Activated B cell treated with CpG ODN at 0.5 μM for 24 hours (primary cell): ENCODE measurements at regions of chr12 and their contacts with region 1.

Region 1: GRCh38 chr12:46268590-46269558 is at the start of gene SLC38A1:
- DNase-seq: peak; percentile 77
- ATAC-seq: peak; percentile 71
- H3K4me3 Mint-ChIP-seq: no peak within 1 kb of the TSS
- H3K27ac Mint-ChIP-seq: no peak within 1 kb of the TSS
- H3K4me1 Mint-ChIP-seq: peaks cover 22% of the 10 kb centered on the region
- H3K27me3 Mint-ChIP-seq: no peaks in the 10 kb centered on the region
- CTCF ChIP-seq: no peak
- total RNA-seq, gene SLC38A1: 283 and 314 TPM in 2 replicates

Region 2: GRCh38 chr12:45728630-45729232 is 540.1 kb before region 1 on chr12:
- CTCF ChIA-PET with region 1: no interaction called
- POLR2A ChIA-PET with region 1: interaction called, 9 read pairs
- intact Hi-C with region 1: loop called (anchors 5 kb)
- DNase-seq: peak; percentile 97
- ATAC-seq: peak; percentile 68
- H3K4me3 Mint-ChIP-seq: peak overlapping the region; percentile 92
- H3K27ac Mint-ChIP-seq: peak overlapping the region; percentile 99
- H3K4me1 Mint-ChIP-seq: peaks cover 41% of the 10 kb centered on the region
- H3K27me3 Mint-ChIP-seq: no peaks in the 10 kb centered on the region
- CTCF ChIP-seq: peak; percentile 60

Region 3: GRCh38 chr12:46160101-46160980 is 108.5 kb before region 1 on chr12:
- CTCF ChIA-PET with region 1: interaction called, 3 read pairs
- POLR2A ChIA-PET with region 1: interaction called, 14 read pairs
- intact Hi-C with region 1: no loop called
- DNase-seq: no peak
- ATAC-seq: peak; percentile 50
- H3K4me3 Mint-ChIP-seq: no peak overlapping the region
- H3K27ac Mint-ChIP-seq: peak overlapping the region; percentile 5
- H3K4me1 Mint-ChIP-seq: peaks cover 27% of the 10 kb centered on the region
- H3K27me3 Mint-ChIP-seq: no peaks in the 10 kb centered on the region
- CTCF ChIP-seq: no peak

Region 4: GRCh38 chr12:46209914-46210872 is 58.7 kb before region 1 on chr12:
- CTCF ChIA-PET with region 1: interaction called, 8 read pairs
- POLR2A ChIA-PET with region 1: interaction called, 154 read pairs
- intact Hi-C with region 1: loop called (anchors 1 kb)
- DNase-seq: peak; percentile 47
- ATAC-seq: peak; percentile 70
- H3K4me3 Mint-ChIP-seq: peak overlapping the region; percentile 63
- H3K27ac Mint-ChIP-seq: peak overlapping the region; percentile 93
- H3K4me1 Mint-ChIP-seq: peaks cover 94% of the 10 kb centered on the region
- H3K27me3 Mint-ChIP-seq: no peaks in the 10 kb centered on the region
- CTCF ChIP-seq: no peak

Region 5: GRCh38 chr12:46303039-46303666 is 34.3 kb after region 1 on chr12:
- CTCF ChIA-PET with region 1: interaction called, 10 read pairs
- POLR2A ChIA-PET with region 1: interaction called, 22 read pairs
- intact Hi-C with region 1: loop called (anchors 1 kb)
- DNase-seq: no peak
- ATAC-seq: peak; percentile 74
- H3K4me3 Mint-ChIP-seq: no peak overlapping the region
- H3K27ac Mint-ChIP-seq: peak overlapping the region; percentile 20
- H3K4me1 Mint-ChIP-seq: peaks cover 31% of the 10 kb centered on the region
- H3K27me3 Mint-ChIP-seq: no peaks in the 10 kb centered on the region
- CTCF ChIP-seq: peak; percentile 30

Region 6: GRCh38 chr12:46388427-46389021 is 119.7 kb after region 1 on chr12:
- CTCF ChIA-PET with region 1: interaction called, 4 read pairs
- POLR2A ChIA-PET with region 1: interaction called, 23 read pairs
- intact Hi-C with region 1: loop called (anchors 1 kb)
- DNase-seq: no peak
- ATAC-seq: peak; percentile 66
- H3K4me3 Mint-ChIP-seq: peak overlapping the region; percentile 69
- H3K27ac Mint-ChIP-seq: peak overlapping the region; percentile 91
- H3K4me1 Mint-ChIP-seq: peaks cover 83% of the 10 kb centered on the region
- H3K27me3 Mint-ChIP-seq: no peaks in the 10 kb centered on the region
- CTCF ChIP-seq: no peak

Region 7: DNA sequence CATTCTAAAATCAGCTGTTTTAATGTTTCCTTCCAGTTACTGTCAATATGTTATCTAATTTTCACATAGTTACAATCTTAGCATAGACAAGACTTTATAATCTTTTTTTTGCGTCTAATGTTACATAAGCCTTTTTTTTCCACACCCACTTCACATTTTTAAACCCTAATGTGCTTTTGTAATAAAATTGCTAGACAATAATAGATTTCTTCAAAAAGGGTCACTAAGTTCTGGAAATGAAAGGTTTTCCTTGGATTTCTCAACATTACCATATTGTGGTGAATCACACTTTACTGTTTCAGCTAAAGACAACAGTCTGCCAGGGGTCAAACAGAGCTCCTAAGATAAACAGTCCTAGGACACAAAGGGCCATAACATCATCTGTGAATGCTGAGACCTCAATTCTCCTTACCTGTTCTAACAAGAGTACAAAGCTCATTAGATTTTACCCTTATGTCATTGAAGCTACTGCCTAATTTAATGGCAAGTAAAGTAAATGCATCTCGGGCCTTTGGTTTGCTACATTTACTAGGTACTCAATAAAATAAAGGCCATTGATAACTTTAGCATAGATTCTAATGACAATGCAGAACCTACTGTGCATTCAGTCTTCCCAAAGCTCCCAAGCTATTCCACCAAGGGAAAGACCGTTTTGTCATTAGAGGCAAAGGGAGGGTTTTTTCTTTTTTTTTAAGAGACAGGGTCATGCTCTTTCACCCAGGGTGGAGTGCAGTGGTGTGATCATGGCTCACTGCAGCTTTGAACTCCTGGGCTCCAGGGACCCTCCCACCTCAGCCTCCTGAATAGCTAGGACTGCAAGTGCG is 214.9 kb after region 1 on chr12:
- CTCF ChIA-PET with region 1: no interaction called
- POLR2A ChIA-PET with region 1: no interaction called
- intact Hi-C with region 1: no loop called
- DNase-seq: no peak
- ATAC-seq: no peak
- H3K4me3 Mint-ChIP-seq: no peak overlapping the region
- H3K27ac Mint-ChIP-seq: no peak overlapping the region
- H3K4me1 Mint-ChIP-seq: peaks cover 18% of the 10 kb centered on the region
- H3K27me3 Mint-ChIP-seq: no peaks in the 10 kb centered on the region
- CTCF ChIP-seq: no peak